ENCODE measurements at regions of chr19 and their contacts with region 1.

Region 1: DNA sequence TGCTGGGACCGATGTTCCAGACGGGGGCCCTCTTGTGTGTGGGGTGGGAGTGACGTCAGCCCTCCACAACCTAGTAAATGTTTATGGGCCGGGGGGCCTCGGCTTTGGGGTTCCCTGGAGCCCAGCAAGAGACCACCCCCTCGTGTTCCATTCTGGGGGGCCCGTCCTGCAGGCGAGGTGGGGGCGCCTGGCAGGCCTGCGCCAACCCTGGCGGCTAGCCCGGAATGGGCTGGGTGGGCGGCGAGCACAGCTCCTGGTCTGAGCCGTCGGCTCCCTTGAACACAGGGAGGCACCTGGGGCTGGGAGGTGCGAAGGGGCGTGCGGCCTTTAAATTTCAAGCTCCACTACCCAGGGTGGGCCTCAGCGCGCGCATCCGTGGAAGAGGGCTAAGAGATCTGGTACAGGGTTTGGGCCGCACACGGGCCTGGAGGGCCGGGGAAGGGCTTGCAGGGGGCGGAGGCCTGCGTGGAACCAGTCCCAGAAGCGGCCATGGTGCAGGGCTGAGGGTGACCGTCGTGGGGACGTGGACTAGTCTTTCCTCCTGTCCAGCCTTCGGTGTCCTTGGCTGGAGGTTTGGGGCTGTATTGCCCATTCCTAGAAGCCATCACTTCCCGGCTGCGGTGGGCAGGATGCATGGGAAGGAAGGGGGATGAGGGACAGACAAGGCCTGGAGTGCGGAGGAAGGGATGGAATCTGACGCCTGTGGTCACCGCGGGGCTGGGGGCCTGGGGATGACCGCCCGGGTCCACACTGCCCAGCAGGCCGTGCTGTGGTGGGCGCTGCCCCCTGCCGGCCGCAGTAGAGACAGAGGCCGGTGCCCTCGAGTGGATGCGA is 11.4 kb downstream of the NDUFA11 start:
- DNase-seq: no peak
- ATAC-seq: peak in 1 of 2 donors; percentile 23
- H3K4me3 ChIP-seq: no peak overlapping the region
- H3K27ac ChIP-seq: no peak overlapping the region
- H3K4me1 ChIP-seq: peaks cover 0 to 11% of the 10 kb centered on the region in 2 donors
- H3K27me3 ChIP-seq: peaks cover 26 to 45% (median 30%) of the 10 kb centered on the region in 3 donors
- CTCF ChIP-seq: peak in 4 of 5 experiments; percentile 14 to 56 (median 46)
- POLR2A ChIP-seq: no peak

Region 2: DNA sequence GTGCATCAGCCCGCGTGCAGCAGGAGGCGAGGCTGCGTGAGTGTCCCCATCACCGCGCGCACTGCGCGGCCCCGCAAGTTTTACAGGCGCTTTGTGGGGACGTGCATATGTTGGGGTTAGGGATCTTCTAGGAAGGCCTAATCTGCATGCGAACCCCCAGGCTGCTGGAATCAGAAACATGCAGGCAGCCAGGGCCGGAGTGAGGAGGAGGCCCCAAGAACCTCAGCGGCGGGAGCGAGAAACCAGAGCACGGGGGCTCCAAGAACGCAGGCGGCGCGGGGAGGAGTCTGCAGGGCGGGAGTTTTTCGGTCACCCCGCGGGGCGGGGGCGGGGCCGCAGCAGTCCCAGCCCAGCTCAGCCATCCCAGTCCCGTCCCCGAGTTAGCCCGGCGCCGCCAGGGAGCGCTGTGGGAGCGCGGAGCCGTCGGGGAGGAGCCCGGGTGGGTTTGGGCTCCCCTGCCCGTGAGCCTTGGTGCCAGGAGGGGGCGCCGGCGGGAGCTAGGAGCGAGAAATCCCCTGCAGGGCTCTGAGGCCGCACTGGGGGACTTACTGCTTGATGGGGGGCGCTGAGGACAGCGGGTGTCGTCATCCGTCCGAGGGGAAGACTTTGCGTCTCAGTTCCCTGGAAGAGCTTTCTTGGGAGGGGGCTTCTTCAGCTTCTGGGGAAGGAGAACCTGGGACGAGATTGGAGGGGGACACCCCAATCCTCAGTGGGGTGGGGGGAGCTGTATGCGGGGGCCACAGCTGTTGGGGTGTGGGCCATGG is 88.2 kb before region 1 on chr19:
- in situ Hi-C with region 1: no loop called
- intact Hi-C with region 1: loop called (anchors 2 kb)
- DNase-seq: peak in 1 of 2 donors; percentile 16
- ATAC-seq: peak in 1 of 2 donors; percentile 39
- H3K4me3 ChIP-seq: peak overlapping the region in 2 of 4 donors; percentile 18 to 22
- H3K27ac ChIP-seq: no peak overlapping the region
- H3K4me1 ChIP-seq: peaks cover 0 to 4% of the 10 kb centered on the region in 2 donors
- H3K27me3 ChIP-seq: peaks cover 61 to 75% (median 67%) of the 10 kb centered on the region in 3 donors
- CTCF ChIP-seq: peak in 4 of 5 experiments; percentile 28 to 65 (median 56)
- POLR2A ChIP-seq: no peak

Region 3: GRCh38 chr19:5857203-5858081 is 34.7 kb before region 1 on chr19:
- in situ Hi-C with region 1: no loop called
- intact Hi-C with region 1: no loop called
- DNase-seq: no peak
- ATAC-seq: no peak
- H3K4me3 ChIP-seq: no peak overlapping the region
- H3K27ac ChIP-seq: no peak overlapping the region
- H3K4me1 ChIP-seq: no peaks in the 10 kb centered on the region
- H3K27me3 ChIP-seq: peaks cover 0 to 7% (median 3%) of the 10 kb centered on the region in 3 donors
- CTCF ChIP-seq: no peak
- POLR2A ChIP-seq: no peak

Region 4: GRCh38 chr19:6005321-6006069 is 113.3 kb after region 1 on chr19:
- in situ Hi-C with region 1: no loop called
- intact Hi-C with region 1: no loop called
- DNase-seq: no peak
- ATAC-seq: no peak
- H3K4me3 ChIP-seq: no peak overlapping the region
- H3K27ac ChIP-seq: no peak overlapping the region
- H3K4me1 ChIP-seq: no peaks in the 10 kb centered on the region
- H3K27me3 ChIP-seq: no peaks in the 10 kb centered on the region
- CTCF ChIP-seq: no peak
- POLR2A ChIP-seq: no peak

Measured in gastrocnemius medialis (tissue), 4 donors.